ENCODE measurements at regions of chr3 and their contacts with region 1.

Region 1: GRCh38 chr3:31531992-31532586 is 636 bp upstream of the STT3B start:
- DNase-seq: peak; percentile 96 to 100 (median 99)
- H3K4me3 ChIP-seq: peak overlapping the region; percentile 61 to 99 (median 91)
- H3K27ac ChIP-seq: peak overlapping the region; percentile 92 to 100 (median 99)
- H3K27me3 ChIP-seq: no peaks in the 10 kb centered on the region
- CTCF ChIP-seq: peak in 39 of 56 donors; percentile 3 to 59 (median 37)

Region 2: GRCh38 chr3:30401971-30402370 is 1130.1 kb before region 1 on chr3:
- intact Hi-C with region 1: no loop called
- DNase-seq: no peak
- H3K4me3 ChIP-seq: no peak overlapping the region
- H3K27ac ChIP-seq: no peak overlapping the region
- H3K27me3 ChIP-seq: no peaks in the 10 kb centered on the region
- CTCF ChIP-seq: no peak

Region 3: DNA sequence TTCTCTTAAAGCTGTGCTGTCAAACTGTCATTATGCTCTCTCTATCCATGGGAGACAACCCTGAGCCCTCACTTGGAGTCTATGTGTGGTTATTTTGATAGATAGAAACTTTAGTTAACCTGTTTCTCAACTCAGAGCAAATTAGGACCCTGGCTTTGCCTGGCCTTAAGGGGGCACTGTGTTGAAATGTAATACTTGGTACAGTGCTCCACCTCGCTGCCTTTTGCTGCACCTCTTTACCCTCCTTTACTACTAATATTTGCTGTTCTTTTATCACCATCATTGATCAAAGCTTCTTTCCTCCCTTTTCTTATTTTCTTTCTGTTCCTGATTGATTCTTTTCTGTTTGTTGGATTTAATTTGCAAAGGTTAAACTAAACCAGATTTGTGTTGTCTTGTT is 34.9 kb after region 1 on chr3:
- intact Hi-C with region 1: no loop called
- DNase-seq: no peak
- H3K4me3 ChIP-seq: no peak overlapping the region
- H3K27ac ChIP-seq: no peak overlapping the region
- H3K27me3 ChIP-seq: no peaks in the 10 kb centered on the region
- CTCF ChIP-seq: peak in 17 of 56 donors; percentile 4 to 37 (median 23)

Region 4: DNA sequence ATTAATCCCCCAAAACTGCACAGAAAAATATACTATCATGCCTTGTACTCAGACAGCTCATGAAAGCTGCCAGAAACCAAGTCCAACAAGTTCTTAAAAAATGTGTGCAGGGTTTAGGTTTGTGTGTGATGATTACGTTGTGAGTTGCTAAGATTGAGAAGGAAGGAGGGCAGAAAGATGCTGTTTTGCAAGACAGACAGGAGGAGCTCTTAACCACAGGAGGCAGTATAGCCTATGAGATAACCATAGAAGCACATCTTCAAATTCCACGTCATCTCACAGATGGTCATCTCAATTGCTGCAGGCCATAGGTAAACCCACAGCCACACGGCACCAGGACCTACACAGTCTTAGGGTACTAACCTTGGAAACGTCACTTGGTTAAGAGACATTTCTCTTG is 192.6 kb after region 1 on chr3:
- intact Hi-C with region 1: no loop called
- DNase-seq: no peak
- H3K4me3 ChIP-seq: no peak overlapping the region
- H3K27ac ChIP-seq: no peak overlapping the region
- H3K27me3 ChIP-seq: no peaks in the 10 kb centered on the region
- CTCF ChIP-seq: peak in 26 of 56 donors; percentile 10 to 39 (median 18)

Region 5: DNA sequence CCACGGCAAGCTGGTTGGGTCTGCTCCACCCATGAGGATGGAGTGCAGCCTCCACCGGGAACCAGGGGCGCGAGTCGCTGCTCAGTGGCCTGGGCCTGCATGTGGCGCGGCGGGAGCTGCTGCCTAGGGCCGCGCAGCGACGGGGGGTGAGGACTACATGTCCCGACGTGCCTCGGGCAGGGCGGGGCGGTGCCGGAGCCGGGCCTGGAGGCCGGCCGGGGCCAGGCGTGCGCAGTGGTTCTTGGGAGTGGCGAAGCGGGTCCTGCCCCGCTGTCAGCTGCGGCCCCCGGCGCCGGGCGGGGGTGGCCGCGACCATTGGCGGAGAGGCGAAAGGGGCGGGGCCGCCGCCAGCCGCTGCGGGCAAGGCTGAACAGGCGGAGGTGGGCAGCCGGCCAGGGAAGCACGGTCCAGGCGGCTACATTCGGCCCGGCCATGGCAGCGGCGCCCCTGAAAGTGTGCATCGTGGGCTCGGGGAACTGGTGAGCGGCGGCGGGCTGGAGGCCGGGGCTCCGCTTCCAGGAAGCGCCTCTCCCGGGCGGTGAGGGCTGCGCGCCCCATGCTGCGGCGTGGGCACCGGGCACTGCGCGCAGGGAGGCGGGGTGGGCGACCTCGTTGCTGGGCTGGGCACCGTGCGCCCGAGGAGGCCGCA is 574.3 kb after region 1 on chr3 and contains the start of gene GPD1L:
- intact Hi-C with region 1: loop called in 1 of 2 experiments (anchors 5 kb)
- DNase-seq: peak; percentile 90 to 99 (median 95)
- H3K4me3 ChIP-seq: peak within 1 kb of the TSS; percentile 60 to 96 (median 84)
- H3K27ac ChIP-seq: peak within 1 kb of the TSS in 57 of 59 donors; percentile 3 to 92 (median 79)
- H3K27me3 ChIP-seq: no peaks in the 10 kb centered on the region
- CTCF ChIP-seq: peak in 39 of 56 donors; percentile 4 to 59 (median 31)
- total RNA-seq, gene GPD1L: 32.5 to 90.3 (median 61.9) TPM